ENCODE measurements at regions of chr19 and their contacts with region 1.

Region 1: GRCh38 chr19:13093407-13094105 is 9.1 kb downstream of the LYL1 start:
- DNase-seq: peak; percentile 88

Region 2: DNA sequence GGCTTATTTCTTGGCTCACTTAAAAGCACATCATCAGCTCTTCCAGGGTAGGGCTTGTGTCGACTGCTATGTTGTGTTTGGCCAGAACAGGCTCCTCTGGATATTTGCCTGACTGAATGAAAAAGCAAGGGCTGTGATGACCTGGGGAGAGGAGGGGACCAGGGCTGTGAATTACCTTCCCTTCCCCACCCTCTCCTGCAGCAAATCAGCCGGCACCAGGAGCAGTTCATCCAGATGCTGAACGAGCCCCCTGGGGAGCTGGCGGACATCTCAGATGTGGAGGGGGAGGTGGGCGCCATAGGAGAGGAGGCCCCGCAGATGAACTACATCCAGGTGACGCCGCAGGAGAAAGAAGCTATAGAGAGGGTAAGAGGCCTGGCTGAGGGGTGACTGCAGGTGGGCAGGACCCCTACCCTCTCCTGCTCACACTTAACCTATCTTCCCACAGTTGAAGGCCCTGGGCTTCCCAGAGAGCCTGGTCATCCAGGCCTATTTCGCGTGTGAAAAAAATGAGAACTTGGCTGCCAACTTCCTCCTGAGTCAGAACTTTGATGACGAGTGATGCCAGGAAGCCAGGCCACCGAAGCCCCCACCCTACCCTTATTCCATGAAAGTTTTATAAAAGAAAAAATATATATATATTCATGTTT is 140.9 kb before region 1 on chr19:
- CTCF ChIA-PET with region 1: no interaction called
- POLR2A ChIA-PET with region 1: no interaction called
- DNase-seq: no peak

Region 3: GRCh38 chr19:12965017-12965811 is 128.3 kb before region 1 on chr19:
- CTCF ChIA-PET with region 1: interaction called, 27 read pairs
- POLR2A ChIA-PET with region 1: no interaction called
- DNase-seq: peak; percentile 87

Region 4: GRCh38 chr19:12974301-12975220 is 119.0 kb before region 1 on chr19:
- CTCF ChIA-PET with region 1: interaction called, 35 read pairs
- POLR2A ChIA-PET with region 1: interaction called, 3 read pairs
- DNase-seq: no peak

Region 5: DNA sequence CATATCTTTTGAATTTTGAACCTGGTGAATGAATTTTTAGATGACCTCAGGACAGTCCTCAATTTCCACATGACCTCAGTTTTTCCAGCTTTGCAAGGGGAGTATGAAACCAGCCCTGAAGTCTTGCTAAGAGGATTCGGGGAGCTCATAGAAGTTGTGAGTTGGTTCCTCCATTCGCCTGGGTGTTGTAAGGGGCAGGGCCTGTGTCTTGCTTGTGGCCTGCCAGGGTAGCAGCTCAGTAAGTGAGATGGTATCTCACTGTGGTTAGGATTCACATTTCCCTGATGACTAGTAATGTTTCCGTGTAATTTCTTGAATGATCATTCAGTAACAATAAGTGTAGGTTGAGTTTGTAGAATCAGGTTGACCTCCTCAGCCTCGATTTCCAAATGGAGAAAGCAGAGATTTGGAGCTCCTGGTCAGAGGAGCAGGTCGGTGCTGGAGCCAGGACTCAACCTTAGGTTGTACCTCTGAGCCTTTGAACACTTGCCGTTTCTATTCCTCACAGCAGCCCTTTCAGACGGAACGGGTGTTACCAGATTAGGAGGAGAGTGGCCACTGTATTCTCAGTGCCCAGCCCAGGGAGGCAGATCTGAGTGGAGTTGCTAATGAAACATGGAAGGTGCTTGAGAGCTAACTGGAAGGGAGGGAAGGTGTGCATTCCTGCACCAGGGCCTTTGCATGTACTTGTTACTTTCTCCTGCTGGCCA is 39.1 kb after region 1 on chr19:
- CTCF ChIA-PET with region 1: no interaction called
- POLR2A ChIA-PET with region 1: no interaction called
- DNase-seq: no peak

Region 6: DNA sequence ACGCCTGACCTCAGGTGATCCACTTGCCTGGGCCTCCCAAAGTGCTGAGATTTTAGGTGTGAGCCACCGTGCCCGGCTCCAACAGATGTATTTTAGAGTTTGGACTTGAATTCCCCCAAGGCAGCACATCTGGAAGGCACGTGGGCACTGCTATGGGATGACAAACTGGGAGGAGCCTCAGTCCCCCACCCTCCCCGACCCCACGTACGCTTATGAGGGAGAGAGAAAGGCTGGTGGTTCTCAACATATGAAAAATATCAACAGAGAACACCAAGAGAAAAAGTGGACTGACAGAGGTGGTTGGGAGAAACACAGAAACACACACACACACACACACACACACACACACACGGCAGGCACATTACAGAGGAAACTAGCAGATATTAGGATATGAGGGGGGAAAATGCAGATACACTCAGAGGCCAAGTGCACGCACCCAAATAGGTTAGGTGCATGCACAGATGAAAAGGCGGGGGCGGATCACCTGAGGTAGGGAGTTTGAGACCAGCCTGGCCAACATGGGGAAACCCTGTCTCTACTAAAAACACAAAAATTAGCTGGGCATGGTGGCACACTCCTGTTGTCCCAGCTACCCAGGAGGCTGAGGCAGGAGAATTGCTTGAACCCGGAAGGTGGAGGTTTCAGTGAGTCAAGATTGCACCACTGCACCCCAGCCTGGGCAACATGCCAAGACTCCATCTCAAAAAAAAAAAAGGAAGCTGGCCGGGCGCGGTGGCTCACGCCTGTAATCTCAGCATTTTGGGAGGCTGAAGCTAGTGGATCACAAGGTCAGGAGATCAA is 53.4 kb after region 1 on chr19:
- CTCF ChIA-PET with region 1: no interaction called
- POLR2A ChIA-PET with region 1: no interaction called
- DNase-seq: no peak

Region 7: DNA sequence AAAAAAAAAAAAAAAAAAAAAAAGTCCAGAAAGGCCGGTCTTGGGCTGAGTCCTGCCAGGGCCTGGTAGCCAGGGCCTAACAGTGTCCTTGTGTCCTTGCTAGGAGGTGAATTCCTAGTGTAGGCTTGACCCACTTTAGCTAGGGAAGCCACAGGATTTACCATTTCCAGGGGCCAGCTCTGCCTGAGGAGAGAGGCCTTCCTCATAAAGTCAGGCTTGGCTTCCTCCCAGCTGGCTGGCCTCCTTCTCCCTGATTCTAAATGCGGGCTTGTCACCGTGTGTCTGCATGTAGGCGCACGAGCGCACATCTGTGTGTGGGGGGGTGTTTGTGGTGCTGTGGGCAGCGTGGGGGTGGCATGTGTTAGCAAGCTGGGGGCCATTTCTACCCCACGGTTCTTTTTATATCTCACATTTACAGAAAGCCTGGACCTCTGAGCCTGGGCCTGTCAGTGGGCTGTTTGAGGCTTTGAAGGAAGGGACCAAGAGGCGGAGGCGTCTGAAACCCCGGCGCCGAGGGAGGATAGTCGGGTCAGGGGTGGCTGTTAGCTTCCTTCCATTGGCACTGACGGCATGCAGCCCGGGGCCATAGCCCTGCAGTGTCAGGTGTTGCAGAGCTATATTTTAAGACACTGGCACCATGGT is 88.3 kb after region 1 on chr19:
- CTCF ChIA-PET with region 1: no interaction called
- POLR2A ChIA-PET with region 1: no interaction called
- DNase-seq: peak; percentile 6

Measured in HEK293T (cell line).